PC-9 (cell line): ENCODE measurements at regions of chr13 and their contacts with region 1.

Region 1: GRCh38 chr13:93045836-93046235 is 180.8 kb upstream of the GPC6 start:
- DNase-seq: no peak
- H3K4me3 ChIP-seq: no peak overlapping the region
- H3K27ac ChIP-seq: no peak overlapping the region
- H3K4me1 ChIP-seq: no peaks in the 10 kb centered on the region
- H3K27me3 ChIP-seq: no peaks in the 10 kb centered on the region
- CTCF ChIP-seq: no peak

Region 2: DNA sequence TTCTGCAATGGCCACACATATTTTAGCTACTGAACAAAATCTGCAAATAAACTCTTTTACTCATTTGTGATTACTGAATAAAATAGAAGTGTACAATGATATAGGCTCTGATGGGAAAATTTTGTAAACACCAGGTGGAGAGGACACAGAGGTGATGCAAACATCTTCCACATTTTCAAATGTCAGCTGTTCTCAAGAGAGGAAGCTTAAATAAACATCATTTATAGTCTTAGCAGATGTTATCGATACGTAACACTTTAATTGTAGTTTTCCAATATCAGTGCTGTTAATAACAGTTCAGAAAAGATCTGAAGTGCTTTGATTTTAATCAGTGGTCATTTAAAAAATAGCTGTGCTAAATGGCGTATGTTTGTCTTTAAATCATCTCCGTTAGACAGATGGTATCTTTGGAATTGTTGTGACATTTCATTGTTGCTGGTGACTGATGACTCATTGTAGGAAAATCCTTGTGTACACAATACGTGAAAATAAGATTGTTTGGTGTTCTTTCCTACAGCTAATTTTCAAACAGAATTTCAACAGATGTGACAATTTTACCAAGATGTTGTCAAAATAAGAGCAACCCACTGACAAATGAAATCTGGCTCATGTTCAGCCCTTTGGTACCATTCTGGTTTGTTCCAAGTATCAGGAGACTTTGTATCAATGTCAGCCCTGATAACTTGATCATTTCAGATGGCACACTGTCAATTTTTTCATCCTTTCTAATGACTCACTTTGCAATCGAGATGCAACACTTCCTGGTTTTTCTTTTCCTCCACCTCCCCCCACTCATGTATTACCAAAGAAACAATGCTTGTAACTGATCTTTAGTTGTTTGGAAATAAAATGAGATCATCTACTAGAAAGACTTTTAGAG is 917.7 kb after region 1 on chr13:
- CTCF ChIA-PET with region 1: no interaction called
- POLR2A ChIA-PET with region 1: no interaction called
- intact Hi-C with region 1: loop called (anchors 10 kb)
- DNase-seq: peak in 1 of 2 experiments; percentile 61
- H3K4me3 ChIP-seq: no peak overlapping the region
- H3K27ac ChIP-seq: peak overlapping the region; percentile 10; the same call in 1 of the 2 replicates
- H3K4me1 ChIP-seq: peaks cover 5% of the 10 kb centered on the region; the same call in 1 of the 2 replicates
- H3K27me3 ChIP-seq: no peaks in the 10 kb centered on the region
- CTCF ChIP-seq: no peak